ENCODE measurements at regions of chr7 and their contacts with region 1.

Region 1: DNA sequence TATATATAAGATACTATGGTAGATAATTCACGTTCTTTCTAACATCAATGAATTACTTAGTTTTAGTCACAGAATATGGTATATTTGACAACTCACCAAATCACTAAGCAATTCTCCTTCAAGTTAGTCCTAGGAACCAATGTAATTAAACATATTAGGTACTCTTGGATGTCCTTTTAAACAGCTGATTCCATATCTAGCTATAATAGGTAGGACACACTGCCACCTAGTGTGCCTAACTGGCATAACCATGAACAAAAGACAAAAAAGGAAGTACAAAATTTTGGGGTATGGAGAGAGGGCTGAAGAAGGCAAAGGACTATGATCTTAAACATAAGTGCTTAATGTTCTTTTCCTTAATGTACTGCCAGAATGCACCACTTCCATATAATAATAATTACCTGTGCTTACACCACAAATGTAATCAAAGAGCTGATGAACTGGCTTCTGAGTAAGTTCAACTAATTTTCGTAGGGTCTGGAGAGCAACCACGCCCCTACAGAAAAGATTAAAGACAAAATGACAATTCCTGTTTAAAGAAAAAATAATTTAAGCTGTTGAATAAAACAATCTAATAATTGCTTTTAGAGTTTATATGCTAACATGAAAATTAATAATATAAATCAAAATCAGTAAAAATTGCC is 28.7 kb downstream of the PNPLA8 start:
- DNase-seq: peak; percentile 21
- H3K4me3 ChIP-seq: no peak overlapping the region
- H3K27ac ChIP-seq: no peak overlapping the region
- H3K4me1 ChIP-seq: no peaks in the 10 kb centered on the region
- H3K27me3 ChIP-seq: no peaks in the 10 kb centered on the region
- CTCF ChIP-seq: peak; percentile 62 to 84 (median 79)
- EP300 ChIP-seq: no peak
- POLR2A ChIP-seq: no peak

Region 2: GRCh38 chr7:108181073-108181985 is 315.9 kb before region 1 on chr7:
- in situ Hi-C with region 1: loop called (anchors 5 to 25 kb)
- intact Hi-C with region 1: loop called (anchors 5 kb)
- DNase-seq: no peak
- H3K4me3 ChIP-seq: no peak overlapping the region
- H3K27ac ChIP-seq: no peak overlapping the region
- H3K4me1 ChIP-seq: no peaks in the 10 kb centered on the region
- H3K27me3 ChIP-seq: no peaks in the 10 kb centered on the region
- CTCF ChIP-seq: peak; percentile 65 to 79 (median 70)
- EP300 ChIP-seq: no peak
- POLR2A ChIP-seq: no peak

Region 3: GRCh38 chr7:108189733-108190388 is 307.3 kb before region 1 on chr7:
- in situ Hi-C with region 1: loop called in 3 of 4 experiments (anchors 25 kb)
- intact Hi-C with region 1: loop called (anchors 5 kb)
- DNase-seq: no peak
- H3K4me3 ChIP-seq: no peak overlapping the region
- H3K27ac ChIP-seq: no peak overlapping the region
- H3K4me1 ChIP-seq: no peaks in the 10 kb centered on the region
- H3K27me3 ChIP-seq: no peaks in the 10 kb centered on the region
- CTCF ChIP-seq: no peak
- EP300 ChIP-seq: no peak
- POLR2A ChIP-seq: no peak

Region 4: DNA sequence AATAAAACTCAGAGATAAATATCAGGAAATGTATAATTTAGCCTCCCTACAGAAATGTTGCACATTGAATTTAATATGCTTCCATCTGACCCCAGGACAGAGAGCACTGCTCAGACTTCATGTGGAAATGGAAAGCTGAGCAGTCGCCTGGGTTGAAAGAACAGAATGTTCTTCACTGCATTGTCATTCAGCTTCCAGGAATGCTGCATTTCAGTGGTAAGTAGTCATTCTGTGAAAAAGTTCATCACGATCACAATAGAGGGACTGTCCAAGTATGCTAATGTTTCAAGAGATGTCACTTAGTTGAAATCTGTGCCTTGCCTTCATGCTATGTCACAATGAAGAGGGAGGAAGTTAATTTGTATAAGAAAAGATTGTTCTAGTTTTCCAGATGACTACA is 188.3 kb before region 1 on chr7:
- in situ Hi-C with region 1: no loop called
- intact Hi-C with region 1: no loop called
- DNase-seq: no peak
- H3K4me3 ChIP-seq: no peak overlapping the region
- H3K27ac ChIP-seq: no peak overlapping the region
- H3K4me1 ChIP-seq: no peaks in the 10 kb centered on the region
- H3K27me3 ChIP-seq: no peaks in the 10 kb centered on the region
- CTCF ChIP-seq: no peak
- EP300 ChIP-seq: no peak
- POLR2A ChIP-seq: no peak

Measured in transverse colon (tissue), 4 donors.